RWPE1 (cell line): ENCODE measurements at regions of chr11 and their contacts with region 1.

Region 1: DNA sequence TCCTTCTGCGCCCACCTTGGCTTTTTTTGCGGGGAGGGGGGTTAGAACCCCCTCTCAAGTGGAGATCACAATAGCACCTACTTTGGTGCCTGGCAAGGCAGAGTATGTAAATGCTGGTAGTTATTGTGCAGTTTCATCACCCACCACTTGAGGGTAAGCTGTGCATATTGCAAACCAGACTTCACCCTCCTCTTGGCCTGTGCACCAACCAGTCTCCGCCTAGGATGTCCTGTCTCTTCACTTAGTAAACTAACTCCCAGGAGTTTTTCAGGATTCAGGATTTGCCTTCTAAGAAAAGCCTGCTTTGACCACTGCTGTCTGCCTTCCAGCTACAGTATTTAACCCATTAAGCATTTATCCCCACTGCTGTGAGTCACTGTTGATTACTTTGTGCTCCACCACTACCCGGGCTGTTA is 2.0 kb upstream of the UBXN1 start:
- DNase-seq: peak; percentile 69
- H3K27ac ChIP-seq: peak overlapping the region; percentile 88
- CTCF ChIP-seq: peak; percentile 71

Region 2: DNA sequence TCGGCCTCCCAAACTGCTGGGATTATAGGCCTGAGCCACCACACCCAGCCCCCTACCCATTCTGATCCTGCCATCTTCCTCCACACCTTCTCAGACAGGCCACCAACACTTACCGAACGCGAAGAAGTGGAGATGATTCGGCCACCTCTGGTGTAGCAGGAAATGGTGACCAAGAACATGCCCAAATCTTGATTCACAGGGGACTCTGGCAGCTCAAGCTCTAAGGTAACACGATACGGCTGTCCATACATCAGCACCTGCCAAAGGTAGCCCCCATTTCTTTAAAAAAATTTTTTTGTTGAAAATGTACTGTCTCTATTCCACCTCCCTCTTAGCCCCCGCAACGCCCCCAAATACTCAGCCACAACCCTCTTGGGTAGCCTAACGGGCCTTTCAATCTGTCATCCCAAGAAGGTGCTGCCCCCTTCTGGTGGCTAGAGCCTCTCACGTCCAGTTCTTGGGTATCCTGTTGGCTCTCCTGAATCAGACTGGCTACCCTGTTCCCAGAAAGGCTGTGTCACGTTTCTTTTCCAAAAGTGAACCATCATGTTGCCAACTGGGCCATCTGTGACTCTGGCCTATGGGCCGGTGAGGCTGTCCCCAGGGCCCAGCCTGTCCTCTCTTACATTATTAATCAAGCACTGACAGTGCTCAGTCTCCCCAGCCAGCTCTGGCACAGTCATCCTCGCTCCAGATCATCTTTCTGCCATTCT is 13.8 kb after region 1 on chr11:
- CTCF ChIA-PET with region 1: interaction called, 17 read pairs
- POLR2A ChIA-PET with region 1: interaction called, 5 read pairs
- DNase-seq: no peak
- H3K27ac ChIP-seq: peak overlapping the region; percentile 54
- CTCF ChIP-seq: peak; percentile 74